Mammary epithelial cell (primary cell): ENCODE measurements at regions of chr16 and their contacts with region 1.

Region 1: DNA sequence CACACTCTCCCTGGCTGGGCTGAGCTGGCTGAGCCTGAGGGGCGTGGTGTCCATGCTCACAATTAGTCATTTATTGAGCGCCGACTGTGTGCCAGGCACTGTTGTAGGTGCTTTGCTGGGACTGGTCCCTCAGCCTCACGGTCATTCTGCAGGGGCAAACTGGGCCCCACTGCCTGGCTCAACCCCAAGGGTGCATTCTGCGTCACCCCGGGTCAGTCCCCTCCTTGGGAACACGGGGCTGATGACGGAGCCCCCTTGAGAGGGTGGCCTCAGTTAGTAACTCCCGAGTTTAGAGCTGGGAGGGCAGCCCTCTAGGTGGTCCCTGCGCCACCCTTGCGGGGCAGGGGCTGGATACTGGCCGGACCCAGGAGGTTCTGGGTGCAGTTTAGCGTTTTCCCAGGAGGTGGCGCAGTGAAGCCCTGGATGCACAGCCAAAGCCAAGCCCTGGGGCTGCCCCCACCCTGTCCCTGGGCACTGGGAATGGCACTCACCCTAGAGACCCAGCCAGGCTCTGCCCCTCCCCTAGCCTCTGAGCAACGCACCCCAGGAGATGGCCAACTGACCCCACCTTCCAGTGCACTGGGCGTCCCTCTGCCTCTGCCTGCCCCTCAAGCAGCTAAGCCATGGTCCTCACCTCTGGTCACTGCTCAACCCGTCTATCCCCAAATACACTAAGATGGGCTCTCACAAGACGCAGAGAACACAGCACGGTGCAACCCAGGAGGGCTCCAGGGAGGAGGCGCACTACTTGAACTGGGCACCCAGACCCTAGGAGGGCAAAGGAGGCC is 243.2 kb upstream of the GSE1 start:
- DNase-seq: no peak
- H3K4me3 ChIP-seq: no peak overlapping the region
- H3K27ac ChIP-seq: no peak overlapping the region
- H3K4me1 ChIP-seq: peaks cover 47% of the 10 kb centered on the region
- H3K27me3 ChIP-seq: no peaks in the 10 kb centered on the region
- CTCF ChIP-seq: peak; percentile 68 to 83

Region 2: GRCh38 chr16:85316321-85316919 is 53.5 kb before region 1 on chr16:
- CTCF ChIA-PET with region 1: no interaction called
- dilution Hi-C with region 1: loop called (anchors 5 kb)
- in situ Hi-C with region 1: no loop called
- intact Hi-C with region 1: no loop called
- DNase-seq: peak; percentile 32
- H3K4me3 ChIP-seq: no peak overlapping the region
- H3K27ac ChIP-seq: no peak overlapping the region
- H3K4me1 ChIP-seq: peaks cover 16% of the 10 kb centered on the region
- H3K27me3 ChIP-seq: no peaks in the 10 kb centered on the region
- CTCF ChIP-seq: peak; percentile 70 to 93

Region 3: GRCh38 chr16:85384840-85385462 is 15.0 kb after region 1 on chr16:
- CTCF ChIA-PET with region 1: no interaction called
- dilution Hi-C with region 1: no loop called
- in situ Hi-C with region 1: no loop called
- intact Hi-C with region 1: loop called (anchors 1 kb)
- DNase-seq: peak; percentile 84
- H3K4me3 ChIP-seq: peak overlapping the region in 2 of 3 experiments; percentile 2 to 14
- H3K27ac ChIP-seq: no peak overlapping the region
- H3K4me1 ChIP-seq: peaks cover 32% of the 10 kb centered on the region
- H3K27me3 ChIP-seq: no peaks in the 10 kb centered on the region
- CTCF ChIP-seq: no peak

Region 4: DNA sequence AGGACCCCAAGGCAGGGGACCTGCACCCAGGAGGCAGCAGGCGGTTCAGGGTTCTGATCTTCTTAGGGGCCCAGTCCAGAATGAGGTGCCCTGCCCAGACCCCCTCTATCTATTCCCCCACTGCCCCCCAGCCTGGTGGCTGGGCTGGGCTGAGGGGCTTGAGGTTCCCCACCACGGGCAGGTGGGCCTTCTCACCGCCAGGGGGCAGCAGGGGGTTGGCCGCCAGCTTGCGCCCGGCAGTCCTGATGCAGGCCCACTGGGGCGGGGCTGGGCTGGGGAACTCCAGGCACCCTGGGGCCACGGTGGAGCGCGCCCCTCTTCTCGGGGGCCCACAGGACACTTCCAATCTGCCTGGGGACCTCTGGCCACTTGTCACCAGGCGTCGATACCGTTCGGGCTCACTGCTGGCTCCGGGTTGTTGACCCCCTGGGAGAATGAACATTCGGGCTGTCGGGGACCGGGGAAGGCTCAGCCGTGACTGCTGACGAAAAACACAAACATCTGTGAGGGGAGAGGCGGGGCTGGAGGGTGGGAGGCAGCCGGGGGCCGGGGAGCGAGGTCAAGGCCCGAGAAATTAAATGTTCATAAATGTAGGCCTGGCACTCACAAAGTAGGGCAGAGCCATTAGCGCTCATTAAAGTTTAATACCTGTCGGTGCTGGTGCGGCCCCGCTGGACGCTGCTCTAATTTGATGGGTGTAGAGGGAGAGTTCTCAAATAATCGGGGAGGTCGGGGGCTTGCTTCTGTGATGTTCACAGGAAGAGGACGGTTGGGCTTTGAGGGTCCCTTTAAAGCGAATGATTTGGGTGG is 23.9 kb after region 1 on chr16:
- CTCF ChIA-PET with region 1: no interaction called
- dilution Hi-C with region 1: no loop called
- in situ Hi-C with region 1: no loop called
- intact Hi-C with region 1: loop called (anchors 1 kb)
- DNase-seq: no peak
- H3K4me3 ChIP-seq: no peak overlapping the region
- H3K27ac ChIP-seq: no peak overlapping the region
- H3K4me1 ChIP-seq: peaks cover 54% of the 10 kb centered on the region
- H3K27me3 ChIP-seq: no peaks in the 10 kb centered on the region
- CTCF ChIP-seq: peak; percentile 31 to 49

Region 5: DNA sequence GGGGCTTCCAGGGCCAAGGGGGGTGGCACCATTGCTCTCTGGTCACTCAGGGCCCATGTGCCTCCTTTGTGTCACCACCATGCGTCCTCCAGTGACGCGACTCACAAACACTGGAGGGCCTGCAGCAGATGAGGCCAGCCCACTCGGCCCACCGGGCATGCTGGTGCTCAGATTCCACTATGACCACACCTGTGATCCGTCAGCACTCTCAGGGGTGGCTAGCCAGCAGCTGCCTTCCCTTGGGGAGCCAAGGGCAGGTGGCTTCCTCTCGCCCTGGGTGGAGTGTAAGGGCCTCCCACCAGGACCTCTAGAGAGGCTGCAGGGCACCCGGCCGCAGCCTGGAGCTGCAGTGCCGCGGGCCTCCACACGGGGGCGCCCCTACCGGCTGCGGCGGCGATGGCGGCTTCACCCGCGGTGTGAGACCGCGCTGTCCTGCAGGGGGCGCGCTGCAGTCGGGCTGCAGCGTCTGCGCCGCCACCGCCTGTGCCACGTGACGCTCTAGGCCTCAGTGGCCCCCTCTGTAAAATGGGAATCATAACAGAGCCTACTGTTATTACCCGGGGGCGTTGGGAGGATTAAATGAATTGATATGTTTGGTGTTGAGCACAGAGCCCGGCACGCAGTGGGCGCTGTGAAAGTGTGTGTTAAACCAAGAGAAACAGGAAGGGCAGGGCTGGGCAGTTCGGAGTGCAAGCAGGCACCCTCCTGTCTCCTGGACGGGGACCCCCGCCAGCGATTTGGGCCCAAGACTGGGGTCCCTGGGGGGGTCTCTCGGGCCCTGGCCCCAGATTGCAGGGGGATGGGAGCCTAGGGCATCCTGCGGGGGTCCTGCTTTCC is 50.8 kb after region 1 on chr16:
- CTCF ChIA-PET with region 1: interaction called, 4 read pairs
- dilution Hi-C with region 1: no loop called
- in situ Hi-C with region 1: no loop called
- intact Hi-C with region 1: loop called (anchors 1 kb)
- DNase-seq: peak; percentile 20
- H3K4me3 ChIP-seq: no peak overlapping the region
- H3K27ac ChIP-seq: no peak overlapping the region
- H3K4me1 ChIP-seq: no peaks in the 10 kb centered on the region
- H3K27me3 ChIP-seq: no peaks in the 10 kb centered on the region
- CTCF ChIP-seq: peak; percentile 82 to 90

Region 6: GRCh38 chr16:85457381-85457780 is 87.4 kb after region 1 on chr16:
- CTCF ChIA-PET with region 1: no interaction called
- dilution Hi-C with region 1: loop called (anchors 5 kb)
- in situ Hi-C with region 1: no loop called
- intact Hi-C with region 1: no loop called
- DNase-seq: peak; percentile 46
- H3K4me3 ChIP-seq: no peak overlapping the region
- H3K27ac ChIP-seq: no peak overlapping the region
- H3K4me1 ChIP-seq: peaks cover 4% of the 10 kb centered on the region
- H3K27me3 ChIP-seq: peaks cover 9% of the 10 kb centered on the region
- CTCF ChIP-seq: no peak

Region 7: DNA sequence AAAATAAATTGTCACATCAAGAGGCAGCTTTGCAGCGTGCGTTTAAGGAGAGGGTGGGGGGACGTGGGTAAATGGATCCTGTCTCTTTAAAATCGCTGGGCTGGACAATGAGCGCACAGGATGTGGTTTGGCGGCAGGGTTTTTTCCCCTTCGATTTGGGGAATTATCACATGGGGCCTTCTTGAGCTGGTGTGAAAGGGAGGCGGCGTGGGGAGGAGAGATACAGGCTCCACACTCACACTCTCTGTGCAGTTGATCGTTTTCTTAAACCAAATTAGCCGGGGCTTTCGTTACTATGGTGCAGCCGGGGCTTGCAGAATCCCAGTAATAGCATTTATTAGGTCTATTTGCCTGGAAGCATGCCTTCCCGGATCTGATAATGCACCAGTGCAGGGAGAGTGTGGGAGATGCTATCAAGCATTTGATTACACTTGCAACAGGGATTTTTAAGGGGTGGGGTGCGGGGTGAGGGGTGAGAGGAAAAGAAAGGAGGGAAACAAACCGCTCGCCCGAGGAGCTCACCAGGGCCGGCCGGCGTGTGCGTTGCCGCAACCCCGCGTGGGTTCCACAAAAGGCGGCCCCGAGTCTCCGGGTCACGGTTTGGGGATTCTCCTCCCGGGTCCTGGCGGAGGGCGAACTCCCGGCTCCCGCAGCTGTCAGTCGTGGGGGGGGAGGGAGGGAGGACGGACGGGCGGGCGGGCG is 184.3 kb after region 1 on chr16:
- CTCF ChIA-PET with region 1: no interaction called
- dilution Hi-C with region 1: no loop called
- in situ Hi-C with region 1: no loop called
- intact Hi-C with region 1: loop called (anchors 5 kb)
- DNase-seq: peak; percentile 79
- H3K4me3 ChIP-seq: peak overlapping the region; percentile 38 to 74 (median 71)
- H3K27ac ChIP-seq: peak overlapping the region; percentile 53
- H3K4me1 ChIP-seq: peaks cover 22% of the 10 kb centered on the region
- H3K27me3 ChIP-seq: no peaks in the 10 kb centered on the region
- CTCF ChIP-seq: no peak